CD4-positive, alpha-beta memory T cell (primary cell): ENCODE measurements at regions of chr16 and their contacts with region 1.

Region 1: DNA sequence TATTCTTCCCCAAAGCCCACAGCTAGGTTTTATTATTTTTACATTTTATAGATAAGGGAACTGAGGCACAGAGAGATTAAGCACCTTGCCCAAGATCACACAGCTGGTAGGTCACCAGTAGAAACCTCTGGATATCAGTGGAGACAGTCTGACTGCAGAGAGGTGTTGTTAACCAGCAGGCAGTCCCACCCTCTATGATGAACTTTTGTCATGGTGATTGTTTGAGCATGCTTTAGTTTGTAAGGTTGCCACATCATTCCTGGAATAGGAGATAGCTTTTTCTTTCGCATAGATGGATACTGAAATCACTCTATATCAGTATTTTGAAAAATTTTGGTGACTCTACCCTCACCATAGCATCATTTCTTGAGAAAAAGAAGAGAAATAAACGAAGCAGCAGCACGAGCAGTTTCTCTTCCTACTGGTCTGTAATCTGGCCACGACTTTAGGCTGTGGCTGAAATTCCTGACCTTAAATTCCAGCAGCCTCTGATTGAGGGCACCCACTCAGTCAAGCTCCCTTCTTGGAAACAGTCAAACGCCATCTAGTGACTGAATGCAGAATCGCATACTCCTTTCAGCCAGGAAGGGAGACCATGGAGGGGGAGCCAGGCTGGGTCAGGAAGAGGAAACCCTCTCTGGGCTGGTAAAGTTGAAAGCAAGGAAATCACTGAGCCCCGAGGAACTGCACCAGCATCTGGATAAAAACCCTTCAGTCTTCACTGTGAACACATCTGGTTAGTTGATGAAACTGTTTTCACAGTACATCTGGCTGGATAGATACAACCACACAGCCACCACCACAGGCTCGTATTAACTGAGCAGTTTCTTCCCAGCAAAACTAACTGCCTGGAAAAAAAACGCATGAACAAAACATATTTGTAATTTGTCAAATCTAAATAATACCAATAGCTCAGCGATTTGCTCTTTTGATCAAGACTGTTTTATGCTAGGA is 108.4 kb upstream of the XYLT1 start:
- DNase-seq: peak; percentile 36 to 55 (median 51)
- H3K4me3 ChIP-seq: no peak overlapping the region
- H3K4me3 Mint-ChIP-seq: no peak overlapping the region
- H3K27ac ChIP-seq: no peak overlapping the region
- H3K27ac Mint-ChIP-seq: no peak overlapping the region
- H3K4me1 ChIP-seq: peaks cover 3% of the 10 kb centered on the region
- H3K4me1 Mint-ChIP-seq: peaks cover 0 to 5% (median 1%) of the 10 kb centered on the region in 4 donors
- H3K27me3 ChIP-seq: no peaks in the 10 kb centered on the region
- H3K27me3 Mint-ChIP-seq: peaks cover 2 to 5% of the 10 kb centered on the region in 2 donors

Region 2: DNA sequence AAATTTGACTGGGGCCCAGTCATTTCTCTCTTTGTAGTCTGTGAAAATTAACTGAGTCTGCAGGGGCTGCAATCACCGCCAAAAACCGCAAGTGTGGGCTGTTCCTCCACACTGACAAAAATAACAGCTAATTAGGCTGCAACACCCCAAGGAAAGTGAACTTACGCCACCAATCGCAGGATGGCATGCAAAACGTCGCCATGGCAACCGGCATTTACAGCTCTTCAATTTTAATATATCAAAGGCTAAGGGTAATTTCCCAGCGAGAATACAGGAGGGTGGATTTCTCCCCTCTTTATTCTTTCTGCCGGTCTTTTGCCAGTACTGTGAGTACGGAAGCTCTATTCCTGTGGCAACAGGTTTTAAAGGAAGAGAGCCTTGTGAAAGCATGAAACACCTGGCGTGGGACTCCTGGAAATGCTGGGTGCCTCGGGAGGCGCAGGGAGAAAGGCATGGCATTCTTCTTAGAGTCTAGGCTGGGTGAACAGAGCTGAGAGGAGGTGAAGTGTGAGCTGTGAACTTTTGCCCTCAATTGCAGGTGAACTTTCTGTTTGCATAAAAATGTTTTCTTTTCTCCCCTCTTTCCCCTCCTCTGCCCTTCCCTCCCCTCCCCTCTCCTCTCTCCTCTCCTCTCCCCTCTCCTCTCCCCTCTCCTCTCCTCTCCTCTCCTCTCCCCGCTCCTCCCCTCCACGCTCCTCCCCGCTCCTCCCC is 508.2 kb before region 1 on chr16:
- CTCF ChIA-PET with region 1: no interaction called
- POLR2A ChIA-PET with region 1: no interaction called
- intact Hi-C with region 1: loop called (anchors 1 kb)
- DNase-seq: peak; percentile 78 to 94 (median 84)
- H3K4me3 ChIP-seq: peak overlapping the region; percentile 47 to 51
- H3K4me3 Mint-ChIP-seq: peak overlapping the region; percentile 86 to 94 (median 89)
- H3K27ac ChIP-seq: peak overlapping the region; percentile 72
- H3K27ac Mint-ChIP-seq: peak overlapping the region; percentile 88 to 99 (median 97)
- H3K4me1 ChIP-seq: peaks cover 12% of the 10 kb centered on the region
- H3K4me1 Mint-ChIP-seq: peaks cover 15 to 21% (median 17%) of the 10 kb centered on the region in 4 donors
- H3K27me3 ChIP-seq: no peaks in the 10 kb centered on the region
- H3K27me3 Mint-ChIP-seq: no peaks in the 10 kb centered on the region

Region 3: DNA sequence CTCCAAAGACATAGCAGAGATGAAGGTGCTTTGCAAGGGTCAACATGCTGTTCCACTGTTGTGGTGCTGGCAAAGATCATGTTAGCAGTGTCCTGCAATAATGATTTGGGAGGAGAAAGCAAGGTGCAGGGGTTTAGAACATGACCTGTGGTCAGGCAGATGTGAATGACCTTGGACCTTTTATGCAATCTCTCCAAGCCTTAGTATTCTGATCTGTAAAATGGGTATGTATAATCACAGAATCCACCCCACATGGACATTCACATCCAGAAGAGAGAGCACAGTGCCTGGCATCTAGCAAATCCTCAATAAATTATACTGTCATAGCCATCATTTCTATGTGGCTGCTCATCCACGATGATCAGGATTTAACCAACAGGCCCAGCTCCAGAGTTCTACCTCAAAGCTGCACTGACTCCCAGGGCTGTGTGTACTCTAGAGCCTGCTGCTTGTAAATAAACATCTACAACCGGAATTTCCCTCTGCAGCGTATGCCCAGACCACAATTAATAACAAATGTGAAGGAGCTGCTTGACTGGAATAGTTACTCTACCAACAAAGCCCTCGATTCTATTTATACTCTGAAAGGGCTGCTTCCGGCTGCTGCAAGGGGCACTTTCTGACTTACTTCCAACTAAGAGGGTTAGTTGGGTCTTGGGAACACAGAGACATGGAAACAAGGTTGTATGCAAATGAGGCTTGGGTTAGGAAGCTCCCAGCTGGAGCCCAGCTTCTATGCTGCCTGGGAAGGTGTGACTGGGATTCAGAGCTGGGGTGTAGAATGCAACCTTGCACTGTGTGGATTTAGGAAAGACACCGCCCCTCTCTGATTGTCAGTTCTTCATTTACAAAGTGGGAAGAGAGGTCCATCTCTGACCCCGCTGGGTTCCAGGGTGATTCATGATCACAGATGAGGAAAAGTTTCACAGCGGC is 373.7 kb before region 1 on chr16:
- CTCF ChIA-PET with region 1: interaction called, 12 read pairs
- POLR2A ChIA-PET with region 1: no interaction called
- intact Hi-C with region 1: no loop called
- DNase-seq: no peak
- H3K4me3 ChIP-seq: no peak overlapping the region
- H3K4me3 Mint-ChIP-seq: no peak overlapping the region
- H3K27ac ChIP-seq: no peak overlapping the region
- H3K27ac Mint-ChIP-seq: peak overlapping the region in 3 of 7 donors; percentile 32 to 67 (median 55)
- H3K4me1 ChIP-seq: no peaks in the 10 kb centered on the region
- H3K4me1 Mint-ChIP-seq: peaks cover 4 to 9% (median 5%) of the 10 kb centered on the region in 4 donors
- H3K27me3 ChIP-seq: no peaks in the 10 kb centered on the region
- H3K27me3 Mint-ChIP-seq: no peaks in the 10 kb centered on the region

Region 4: DNA sequence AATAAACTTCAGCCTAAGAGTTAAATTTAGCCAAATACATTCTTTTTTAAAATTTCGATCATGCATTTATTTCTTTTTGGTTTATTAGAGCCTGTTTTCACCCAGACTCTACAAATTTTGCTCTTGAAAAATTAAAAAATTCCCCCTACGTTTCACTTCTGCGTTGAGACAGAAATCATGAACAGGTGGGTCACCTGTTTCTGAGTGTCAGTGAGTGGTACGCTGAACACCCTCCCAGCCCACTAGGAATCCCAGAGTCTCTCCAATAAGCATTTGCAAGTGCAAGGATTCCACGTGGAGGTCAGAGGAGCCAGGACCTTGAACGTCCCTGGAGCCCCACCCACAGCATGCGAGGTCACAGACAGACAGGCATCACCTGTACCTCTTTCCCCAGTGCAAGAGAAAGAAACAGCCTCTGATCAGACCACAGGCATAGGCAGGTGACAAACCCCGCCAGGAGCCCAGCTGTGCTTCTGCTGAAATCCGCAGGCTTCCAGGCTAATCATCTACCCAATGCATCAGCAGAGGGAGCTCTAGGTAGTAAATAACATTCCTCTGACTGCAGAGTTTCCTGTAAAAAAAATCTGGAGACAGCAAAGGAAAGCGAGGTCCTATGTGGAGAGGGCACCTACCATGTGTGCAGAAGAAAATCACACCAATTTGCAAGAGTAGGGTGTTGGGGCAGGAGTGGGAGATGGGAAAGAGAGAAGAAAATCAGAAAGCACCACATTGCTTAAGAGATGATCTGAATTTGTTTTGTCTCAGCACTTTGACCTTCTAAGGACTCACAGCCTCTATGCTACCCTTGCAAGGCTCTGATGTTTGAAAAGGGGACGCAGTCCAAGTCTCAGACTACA is 102.6 kb before region 1 on chr16:
- CTCF ChIA-PET with region 1: interaction called, 16 read pairs
- POLR2A ChIA-PET with region 1: no interaction called
- intact Hi-C with region 1: loop called (anchors 2 kb)
- DNase-seq: peak; percentile 39 to 53 (median 49)
- H3K4me3 ChIP-seq: no peak overlapping the region
- H3K4me3 Mint-ChIP-seq: peak overlapping the region in 1 of 8 donors; percentile 32
- H3K27ac ChIP-seq: no peak overlapping the region
- H3K27ac Mint-ChIP-seq: peak overlapping the region in 3 of 7 donors; percentile 23 to 81 (median 29)
- H3K4me1 ChIP-seq: peaks cover 16% of the 10 kb centered on the region
- H3K4me1 Mint-ChIP-seq: peaks cover 13 to 39% (median 20%) of the 10 kb centered on the region in 4 donors
- H3K27me3 ChIP-seq: peaks cover 5% of the 10 kb centered on the region
- H3K27me3 Mint-ChIP-seq: peaks cover 8 to 12% of the 10 kb centered on the region in 2 donors

Region 5: GRCh38 chr16:17591655-17592405 is 12.6 kb after region 1 on chr16:
- CTCF ChIA-PET with region 1: interaction called, 14 read pairs
- POLR2A ChIA-PET with region 1: no interaction called
- intact Hi-C with region 1: no loop called
- DNase-seq: peak; percentile 22 to 62 (median 56)
- H3K4me3 ChIP-seq: no peak overlapping the region
- H3K4me3 Mint-ChIP-seq: peak overlapping the region in 7 of 8 donors; percentile 57 to 67 (median 60)
- H3K27ac ChIP-seq: peak overlapping the region; percentile 59
- H3K27ac Mint-ChIP-seq: peak overlapping the region; percentile 86 to 94 (median 92)
- H3K4me1 ChIP-seq: no peaks in the 10 kb centered on the region
- H3K4me1 Mint-ChIP-seq: peaks cover 0 to 8% (median 3%) of the 10 kb centered on the region in 4 donors
- H3K27me3 ChIP-seq: no peaks in the 10 kb centered on the region
- H3K27me3 Mint-ChIP-seq: peaks cover 13 to 18% of the 10 kb centered on the region in 2 donors